ENCODE measurements at regions of chr17 and their contacts with region 1.

Region 1: DNA sequence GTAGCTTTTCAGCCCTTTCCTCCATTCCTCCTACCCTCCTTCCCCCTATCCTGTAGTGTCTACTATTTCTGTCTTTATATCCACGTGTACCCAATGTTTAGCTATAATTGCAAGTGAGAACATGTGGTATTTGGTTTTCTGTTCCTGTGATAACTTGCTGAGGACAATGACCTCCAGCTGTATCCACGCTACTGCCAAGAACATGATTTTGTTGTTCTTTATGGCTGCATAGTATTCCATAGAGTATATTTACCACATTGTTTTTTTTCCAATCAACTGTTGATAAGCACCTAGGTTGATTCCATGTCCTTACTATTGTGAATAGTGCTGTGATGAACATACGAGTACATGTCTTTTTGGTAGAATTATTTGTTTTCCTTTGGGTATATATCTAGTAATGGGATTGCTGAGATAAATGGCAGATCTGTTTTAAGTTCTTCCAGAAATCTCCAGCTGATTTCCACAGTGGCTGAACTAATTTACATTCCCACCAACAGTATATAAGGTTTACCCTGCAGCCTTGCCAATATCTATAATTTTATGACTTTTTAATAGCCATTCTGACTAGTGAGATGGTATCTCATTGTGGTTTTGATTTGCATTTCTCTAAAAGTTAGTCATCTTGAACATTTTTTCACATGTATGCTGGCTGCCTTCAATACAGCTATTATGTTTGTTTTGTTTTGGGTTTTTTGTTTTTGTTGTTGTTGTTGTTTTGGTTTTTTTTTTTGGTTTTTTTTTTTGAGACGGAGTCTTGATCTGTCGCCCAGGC is 10.9 kb upstream of the COPRS start:
- DNase-seq: no peak
- ATAC-seq: no peak
- H3K4me3 Mint-ChIP-seq: no peak overlapping the region
- H3K27ac Mint-ChIP-seq: no peak overlapping the region
- H3K4me1 Mint-ChIP-seq: no peaks in the 10 kb centered on the region
- H3K27me3 Mint-ChIP-seq: no peaks in the 10 kb centered on the region
- CTCF ChIP-seq: no peak

Region 2: DNA sequence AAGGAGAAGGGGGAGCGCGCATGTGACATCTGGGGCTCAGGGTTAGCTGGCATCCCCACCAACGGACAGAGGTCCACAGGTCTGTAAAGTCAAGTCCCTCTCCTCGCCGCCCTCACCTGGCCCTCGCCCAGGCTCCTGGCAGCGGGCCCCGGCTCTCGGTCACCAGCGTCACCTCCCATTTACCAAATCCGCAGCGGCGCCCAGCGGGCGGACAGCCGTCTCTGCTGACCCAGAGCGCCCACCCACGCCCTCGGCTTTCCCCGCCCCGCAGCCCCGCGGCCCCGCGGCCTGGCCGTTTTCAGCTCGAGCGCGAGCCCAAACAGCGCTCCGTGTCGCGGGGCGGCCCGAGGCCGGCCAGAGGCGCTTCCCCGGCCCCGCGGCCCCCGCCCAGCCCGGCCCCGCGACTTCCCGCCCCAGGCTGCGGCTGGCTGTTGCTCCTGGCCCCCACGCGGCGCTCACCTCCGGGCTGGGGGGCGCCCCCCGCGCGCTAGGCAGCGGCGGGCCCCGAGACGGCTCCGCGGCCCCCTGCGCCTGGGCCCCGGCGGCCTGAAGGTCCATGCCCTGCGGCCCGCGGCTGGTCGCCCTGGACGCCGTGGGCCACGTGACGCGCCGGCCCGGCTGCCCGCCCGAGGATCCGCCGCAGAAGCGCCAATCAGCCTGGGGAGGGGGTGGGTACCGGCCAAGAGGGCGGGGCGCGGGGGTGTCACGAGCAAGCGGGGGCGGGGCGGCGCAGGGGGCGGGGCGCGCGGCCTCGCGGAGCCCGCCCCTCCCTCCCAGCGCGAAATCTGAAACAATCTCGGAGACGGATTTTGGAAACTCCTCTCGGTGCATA is 11.1 kb before region 1 on chr17 and contains the start of gene COPRS:
- CTCF ChIA-PET with region 1: interaction called, 4 read pairs
- POLR2A ChIA-PET with region 1: interaction called, 14 read pairs
- intact Hi-C with region 1: no loop called
- DNase-seq: peak; percentile 80
- ATAC-seq: peak; percentile 85
- H3K4me3 Mint-ChIP-seq: peak within 1 kb of the TSS; percentile 73
- H3K27ac Mint-ChIP-seq: peak within 1 kb of the TSS; percentile 83
- H3K4me1 Mint-ChIP-seq: peaks cover 18% of the 10 kb centered on the region
- H3K27me3 Mint-ChIP-seq: no peaks in the 10 kb centered on the region
- CTCF ChIP-seq: no peak
- total RNA-seq, gene COPRS: 57.5 to 57.6 TPM

Region 3: DNA sequence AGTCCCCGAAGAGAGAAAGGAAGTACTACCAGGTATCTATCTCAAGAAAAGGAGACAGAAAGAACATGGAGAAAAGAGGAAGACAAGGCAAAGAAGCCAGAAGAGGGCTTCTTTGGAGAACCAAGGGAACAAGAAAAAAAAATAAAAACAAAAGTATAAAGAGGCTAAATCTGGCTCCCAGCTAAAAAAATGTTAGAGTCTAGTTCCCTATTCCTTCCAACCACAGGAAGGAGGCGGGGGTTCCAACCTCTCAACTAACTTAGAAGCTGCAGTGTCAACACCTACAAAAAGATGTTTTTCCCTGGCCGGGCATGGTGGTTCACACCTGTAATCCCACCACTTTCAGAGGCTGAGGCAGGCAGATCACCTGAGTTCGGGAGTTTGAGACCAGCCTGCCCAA is 18.1 kb after region 1 on chr17:
- CTCF ChIA-PET with region 1: no interaction called
- POLR2A ChIA-PET with region 1: no interaction called
- intact Hi-C with region 1: no loop called
- DNase-seq: no peak
- ATAC-seq: no peak
- H3K4me3 Mint-ChIP-seq: no peak overlapping the region
- H3K27ac Mint-ChIP-seq: no peak overlapping the region
- H3K4me1 Mint-ChIP-seq: no peaks in the 10 kb centered on the region
- H3K27me3 Mint-ChIP-seq: no peaks in the 10 kb centered on the region
- CTCF ChIP-seq: no peak